ENCODE measurements at regions of chr10 and their contacts with region 1.

Region 1: GRCh38 chr10:73886085-73886529 is 11.8 kb upstream of the CAMK2G start:
- DNase-seq: peak; percentile 61
- ATAC-seq: peak; percentile 87

Region 2: DNA sequence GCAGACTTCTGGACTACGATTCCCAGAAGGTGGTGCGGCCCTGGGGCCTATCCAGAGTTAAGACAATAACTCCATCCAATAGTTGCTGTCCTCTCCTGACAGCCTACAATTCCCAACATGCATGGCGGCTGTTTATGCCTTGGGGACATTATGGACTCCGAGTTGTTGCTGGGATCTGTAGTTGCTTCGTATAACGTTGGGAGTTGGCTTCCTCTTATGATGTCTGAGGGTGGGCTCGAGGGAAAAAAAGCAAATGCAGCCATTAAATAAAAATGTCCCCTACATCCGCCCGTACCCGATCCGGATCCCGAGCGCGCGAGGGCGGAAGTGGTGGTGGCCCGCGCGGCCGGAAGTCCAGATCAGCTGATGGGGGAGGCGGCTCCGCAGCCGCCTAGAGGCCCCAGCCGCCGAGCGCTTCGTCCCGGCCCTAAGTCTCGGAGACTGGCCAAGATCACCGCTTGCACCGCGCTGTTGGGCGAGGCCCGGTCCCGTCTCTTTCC is 100.8 kb before region 1 on chr10 and contains the start of gene ZSWIM8:
- intact Hi-C with region 1: no loop called
- DNase-seq: peak; percentile 92
- ATAC-seq: peak; percentile 92
- total RNA-seq, gene ZSWIM8: 40.3 TPM

Region 3: GRCh38 chr10:73940634-73941221 is 54.6 kb after region 1 on chr10:
- intact Hi-C with region 1: loop called (anchors 2 kb)
- DNase-seq: peak; percentile 95
- ATAC-seq: peak; percentile 97

Region 4: GRCh38 chr10:74081192-74081803 is 195.2 kb after region 1 on chr10:
- intact Hi-C with region 1: loop called (anchors 5 kb)
- DNase-seq: no peak
- ATAC-seq: peak; percentile 66

Region 5: GRCh38 chr10:74380795-74381194 is 494.7 kb after region 1 on chr10:
- intact Hi-C with region 1: no loop called
- DNase-seq: no peak
- ATAC-seq: no peak

Measured in Right ventricle myocardium superior (tissue), 1 donor.